Dendritic cell treated with granulocyte-macrophage colony-stimulating factor and Interleukin-4, amounts not matched to agents 40 ng/mL and 50 ng/mL, for 4 days (primary cell): ENCODE measurements at regions of chr16 and their contacts with region 1.

Region 1: GRCh38 chr16:66552286-66553177 is at the start of gene CKLF:
- H3K4me3 Mint-ChIP-seq: peak within 1 kb of the TSS; percentile 81
- H3K27ac Mint-ChIP-seq: peak within 1 kb of the TSS; percentile 81
- H3K4me1 Mint-ChIP-seq: peaks cover 70% of the 10 kb centered on the region
- H3K27me3 Mint-ChIP-seq: no peaks in the 10 kb centered on the region

Region 2: DNA sequence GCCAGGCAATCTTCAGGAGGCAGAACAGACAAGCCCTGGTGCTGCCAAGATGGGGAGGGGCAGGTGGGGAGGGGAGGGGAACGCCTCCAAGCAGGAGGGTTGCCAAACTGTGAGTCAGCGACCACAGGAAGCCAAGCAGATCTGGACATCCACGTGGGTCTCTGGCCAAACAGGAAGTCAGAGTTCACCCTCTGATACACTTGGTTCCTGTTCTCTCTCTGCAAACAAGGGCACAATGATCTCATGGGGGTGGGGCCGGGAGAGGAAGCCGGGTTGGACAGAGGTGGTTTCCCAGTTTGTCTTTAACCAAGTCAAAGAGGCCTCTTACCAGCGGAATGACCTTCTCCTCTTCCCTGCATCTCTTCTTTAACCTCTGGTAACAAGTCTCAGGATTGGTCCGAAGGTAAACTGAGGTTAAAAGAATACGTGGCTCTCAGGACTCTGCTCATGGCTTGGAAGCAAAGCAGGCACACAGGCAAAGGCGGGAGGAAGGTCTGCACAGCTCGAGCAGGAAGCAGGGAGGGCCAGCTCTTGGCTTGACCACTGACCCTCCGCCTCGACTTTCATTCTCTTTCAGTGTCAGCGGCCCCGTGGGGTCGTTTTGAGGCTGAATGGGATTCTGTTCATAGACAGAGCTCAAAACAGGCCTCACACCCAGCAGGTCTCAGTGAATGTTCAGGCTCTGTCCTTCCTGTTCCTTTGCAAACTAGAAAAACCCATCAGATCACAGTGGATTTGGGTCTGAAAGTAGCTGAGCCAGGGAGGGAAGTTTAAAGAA is 35.5 kb before region 1 on chr16:
- intact Hi-C with region 1: loop called (anchors 1 kb)
- H3K4me3 Mint-ChIP-seq: peak overlapping the region; percentile 80
- H3K27ac Mint-ChIP-seq: peak overlapping the region; percentile 100
- H3K4me1 Mint-ChIP-seq: peaks cover 100% of the 10 kb centered on the region
- H3K27me3 Mint-ChIP-seq: no peaks in the 10 kb centered on the region

Region 3: DNA sequence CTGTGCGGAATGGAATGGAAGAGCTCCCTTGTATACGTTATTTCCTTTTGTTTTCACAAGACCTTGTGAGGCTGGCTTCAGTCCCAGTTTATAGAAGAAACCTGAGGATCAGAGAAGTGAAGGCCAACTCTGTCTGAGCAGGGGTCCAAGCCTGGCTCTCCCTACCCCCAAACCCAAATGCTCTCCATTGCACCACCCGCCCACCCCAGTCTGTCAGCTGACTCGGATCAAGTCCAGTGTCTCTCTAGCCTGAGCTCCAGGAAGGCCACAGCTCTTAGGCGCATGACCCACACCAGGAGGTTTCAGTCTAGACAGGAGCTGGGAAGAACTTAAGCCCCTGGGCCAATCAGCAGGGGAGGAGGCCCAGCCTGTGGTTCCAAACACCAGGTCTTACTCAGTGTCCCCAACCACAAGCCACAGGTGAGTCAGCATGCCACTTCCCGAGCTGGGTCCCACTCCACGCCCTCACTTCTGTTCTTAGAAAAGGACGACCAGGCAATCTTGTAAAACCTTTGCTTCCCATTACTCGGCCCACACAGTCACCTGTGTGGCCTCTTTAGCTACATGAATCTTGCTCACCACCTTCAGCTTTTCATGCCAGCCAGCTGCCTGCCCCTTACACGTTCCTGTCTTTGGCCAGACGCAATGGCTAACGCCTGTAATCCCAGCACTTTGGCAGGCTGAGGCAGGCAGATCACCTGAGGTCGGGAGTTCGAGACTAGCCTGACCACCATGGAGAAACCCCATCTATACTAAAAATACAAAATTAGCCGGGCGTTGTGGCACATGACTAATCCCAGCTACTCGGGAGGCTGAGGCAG is 30.4 kb before region 1 on chr16:
- intact Hi-C with region 1: loop called (anchors 2 kb)
- H3K4me3 Mint-ChIP-seq: peak overlapping the region; percentile 13
- H3K27ac Mint-ChIP-seq: peak overlapping the region; percentile 100
- H3K4me1 Mint-ChIP-seq: peaks cover 100% of the 10 kb centered on the region
- H3K27me3 Mint-ChIP-seq: no peaks in the 10 kb centered on the region

Region 4: DNA sequence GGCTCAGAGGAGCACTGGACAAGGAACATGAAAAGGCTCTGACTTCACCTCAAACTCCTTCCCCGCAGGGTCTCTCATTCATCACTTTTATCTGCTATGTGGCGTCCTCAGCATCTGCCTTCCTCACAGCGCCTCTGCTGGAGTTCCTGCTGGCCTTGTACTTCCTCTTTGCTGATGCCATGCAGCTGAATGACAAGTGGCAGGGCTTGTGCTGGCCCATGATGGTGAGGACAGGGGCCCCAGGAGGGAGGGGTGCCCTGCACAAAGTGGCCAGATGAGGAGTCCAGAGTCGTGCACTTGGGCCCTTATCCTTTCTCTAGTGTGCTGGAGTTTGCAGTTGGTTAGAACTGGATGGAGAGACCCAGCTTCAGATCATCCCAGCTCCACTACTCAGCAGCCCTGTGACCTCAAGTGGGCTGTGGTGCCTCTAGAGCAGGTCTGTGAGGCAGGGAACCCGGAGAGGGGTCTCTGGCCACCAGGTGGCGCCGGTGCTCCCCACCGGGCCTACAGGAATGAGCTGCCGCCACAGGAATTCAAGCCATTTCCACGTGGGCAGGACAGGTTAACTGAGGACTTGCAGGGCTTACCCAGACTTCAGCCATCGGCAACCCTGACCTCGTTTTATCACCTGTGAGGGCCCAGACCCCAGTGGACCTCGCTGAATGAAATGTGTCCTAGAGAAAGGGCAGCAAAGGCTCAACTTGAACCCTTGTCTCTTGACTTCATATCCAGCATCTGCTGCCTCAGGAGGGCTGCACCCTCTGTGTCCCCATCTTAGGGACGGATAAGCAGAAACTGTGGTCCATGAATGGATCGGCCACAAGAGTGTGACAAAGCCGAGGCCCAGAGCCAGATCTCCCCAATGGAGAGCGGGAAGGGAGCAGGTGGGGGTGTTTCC is 56.0 kb after region 1 on chr16:
- intact Hi-C with region 1: loop called (anchors 2 kb)
- H3K4me3 Mint-ChIP-seq: no peak overlapping the region
- H3K27ac Mint-ChIP-seq: peak overlapping the region; percentile 66
- H3K4me1 Mint-ChIP-seq: peaks cover 40% of the 10 kb centered on the region
- H3K27me3 Mint-ChIP-seq: peaks cover 8% of the 10 kb centered on the region